Cardiac septum (tissue), 1 donor: ENCODE measurements at regions of chr9 and their contacts with region 1.

Region 1: GRCh38 chr9:128863647-128864046 is 18.1 kb downstream of the KYAT1 start:
- DNase-seq: peak; percentile 89

Region 2: DNA sequence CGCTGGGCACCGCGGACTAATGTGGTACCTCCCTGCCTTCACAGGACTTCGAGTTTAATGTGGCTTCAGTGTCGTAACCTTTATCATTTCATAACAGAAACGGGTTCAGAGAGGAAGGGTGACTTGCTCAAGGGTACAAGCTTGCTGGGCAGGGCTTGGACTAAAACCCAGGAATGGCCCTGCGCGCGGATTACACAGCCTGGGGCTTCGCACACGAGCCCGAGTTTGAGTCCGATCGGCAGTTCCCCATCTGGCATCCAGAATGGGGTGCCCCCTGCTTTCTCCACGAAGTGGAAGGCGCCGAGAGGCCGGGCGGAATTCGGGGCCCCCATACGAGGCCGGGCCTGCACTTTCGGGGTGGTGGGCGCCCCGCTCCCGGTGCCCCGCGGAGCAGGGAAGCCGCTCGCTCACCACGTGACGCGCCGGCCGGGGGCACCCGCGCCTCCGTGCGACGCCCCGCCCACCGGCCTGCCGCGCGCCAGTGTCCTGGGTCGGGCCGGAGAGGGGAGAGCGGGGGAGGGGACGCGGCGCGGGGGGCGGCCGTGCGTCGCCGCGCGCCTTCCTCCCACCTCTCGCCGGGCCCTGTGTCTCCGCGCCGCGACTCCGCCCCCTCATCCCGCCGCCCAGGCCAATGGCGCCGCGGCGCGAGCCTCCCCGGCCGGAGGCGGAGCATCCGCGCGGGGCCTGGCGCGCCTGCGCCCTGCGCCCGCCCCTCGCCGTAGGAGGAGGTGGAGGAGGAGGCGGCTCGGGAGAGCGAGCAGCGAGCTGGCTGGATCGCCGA is 174.9 kb before region 1 on chr9 and contains the start of gene SET:
- intact Hi-C with region 1: no loop called
- DNase-seq: peak; percentile 96
- total RNA-seq, gene SET: 212 TPM

Region 3: GRCh38 chr9:128927731-128928411 is 64.2 kb after region 1 on chr9:
- intact Hi-C with region 1: loop called (anchors 1 kb)
- DNase-seq: no peak